ENCODE measurements at regions of chr6 and their contacts with region 1.

Region 1: GRCh38 chr6:27608916-27609883 is 136.3 kb upstream of the ZNF184 start:
- DNase-seq: peak; percentile 78
- H3K4me3 Mint-ChIP-seq: no peak overlapping the region
- H3K27ac Mint-ChIP-seq: peak overlapping the region; percentile 57
- H3K4me1 Mint-ChIP-seq: peaks cover 28% of the 10 kb centered on the region
- H3K27me3 Mint-ChIP-seq: no peaks in the 10 kb centered on the region
- CTCF ChIP-seq: peak; percentile 83

Region 2: GRCh38 chr6:27312146-27312949 is 296.9 kb before region 1 on chr6 and contains the start of gene POM121L2:
- CTCF ChIA-PET with region 1: no interaction called
- intact Hi-C with region 1: loop called (anchors 5 kb)
- DNase-seq: peak; percentile 84
- H3K4me3 Mint-ChIP-seq: peak within 1 kb of the TSS; percentile 65
- H3K27ac Mint-ChIP-seq: no peak within 1 kb of the TSS
- H3K4me1 Mint-ChIP-seq: no peaks in the 10 kb centered on the region
- H3K27me3 Mint-ChIP-seq: no peaks in the 10 kb centered on the region
- CTCF ChIP-seq: peak; percentile 87
- total RNA-seq, gene POM121L2: not detected in 2 replicates

Region 3: GRCh38 chr6:27414996-27415395 is 194.2 kb before region 1 on chr6:
- CTCF ChIA-PET with region 1: no interaction called
- intact Hi-C with region 1: no loop called
- DNase-seq: no peak
- H3K4me3 Mint-ChIP-seq: no peak overlapping the region
- H3K27ac Mint-ChIP-seq: no peak overlapping the region
- H3K4me1 Mint-ChIP-seq: no peaks in the 10 kb centered on the region
- H3K27me3 Mint-ChIP-seq: no peaks in the 10 kb centered on the region
- CTCF ChIP-seq: no peak

Region 4: GRCh38 chr6:27624694-27625262 is 15.6 kb after region 1 on chr6:
- CTCF ChIA-PET with region 1: no interaction called
- intact Hi-C with region 1: no loop called
- DNase-seq: no peak
- H3K4me3 Mint-ChIP-seq: no peak overlapping the region
- H3K27ac Mint-ChIP-seq: no peak overlapping the region
- H3K4me1 Mint-ChIP-seq: peaks cover 24% of the 10 kb centered on the region
- H3K27me3 Mint-ChIP-seq: no peaks in the 10 kb centered on the region
- CTCF ChIP-seq: no peak

Measured in Calu3 (cell line).